AG04449 (cell line): ENCODE measurements at regions of chr6 and their contacts with region 1.

Region 1: DNA sequence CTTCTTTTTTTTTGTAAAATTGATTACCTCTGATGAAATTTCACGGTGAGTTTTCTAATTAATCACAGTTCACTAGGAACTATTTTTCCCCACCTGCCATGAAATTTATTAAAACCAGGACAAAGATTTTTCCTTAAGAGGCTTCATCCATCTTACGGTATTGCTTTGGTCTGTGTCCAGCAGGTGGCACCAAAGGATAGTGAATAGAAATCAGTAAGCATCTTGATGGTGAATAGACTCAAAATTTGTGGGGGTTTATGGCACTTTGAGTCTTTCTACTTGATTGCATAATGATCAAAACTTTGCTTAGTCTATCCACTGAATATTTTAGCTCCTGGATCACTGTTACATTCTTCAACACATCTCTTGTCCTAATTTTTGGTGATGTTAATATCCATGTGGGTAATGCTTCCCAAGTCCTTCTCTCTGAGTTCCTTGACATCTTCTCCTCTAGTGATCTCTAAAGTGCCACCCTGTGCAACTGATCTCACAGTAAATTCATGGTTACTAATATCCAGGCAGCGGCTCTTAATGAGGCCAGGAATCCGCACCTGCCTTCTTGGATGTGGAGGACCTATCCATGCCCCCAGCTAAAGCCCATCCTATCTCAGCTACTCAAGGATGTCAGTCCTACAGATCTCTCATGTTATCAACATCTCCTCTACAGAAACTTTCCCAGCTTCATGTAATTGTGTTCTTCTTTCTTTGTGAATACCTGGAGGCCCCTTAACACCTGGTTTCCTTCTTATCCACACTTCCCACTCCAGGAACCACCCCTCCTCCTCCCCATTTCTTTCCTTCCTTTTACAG is 54.5 kb downstream of the STMND1 start:
- DNase-seq: peak; percentile 64
- H3K4me3 ChIP-seq: no peak overlapping the region
- CTCF ChIP-seq: peak; percentile 66

Region 2: GRCh38 chr6:17167327-17167979 is 11.1 kb after region 1 on chr6:
- CTCF ChIA-PET with region 1: interaction called, 11 read pairs
- POLR2A ChIA-PET with region 1: no interaction called
- DNase-seq: no peak
- H3K4me3 ChIP-seq: no peak overlapping the region
- CTCF ChIP-seq: peak; percentile 68

Region 3: DNA sequence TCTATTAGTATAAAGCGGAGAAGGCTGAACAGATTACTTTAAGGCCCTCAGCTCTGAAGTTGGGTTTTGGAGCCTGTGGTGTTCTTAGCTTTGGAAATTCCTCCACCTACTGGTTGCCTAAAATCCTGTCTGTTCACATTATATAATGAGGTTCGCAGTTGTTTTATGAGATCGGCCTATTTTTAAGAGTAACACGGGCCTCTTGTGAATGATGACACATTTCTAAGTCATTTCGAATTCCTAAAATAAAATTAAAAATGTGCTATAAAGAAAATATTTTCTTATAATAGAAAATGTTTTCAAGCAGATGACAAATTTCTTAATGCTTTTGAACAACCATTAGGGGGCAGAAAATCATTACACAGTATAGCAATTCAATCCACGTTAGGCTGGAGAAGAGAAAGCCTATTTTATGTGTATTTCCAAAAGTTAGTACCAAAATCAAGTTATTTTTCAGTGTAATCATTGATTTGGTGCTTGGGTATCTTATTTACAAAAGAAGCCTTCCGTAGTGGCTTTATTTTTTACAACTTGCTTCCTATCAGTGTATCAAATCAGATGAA is 428.0 kb after region 1 on chr6:
- CTCF ChIA-PET with region 1: interaction called, 77 read pairs
- POLR2A ChIA-PET with region 1: no interaction called
- DNase-seq: no peak
- H3K4me3 ChIP-seq: no peak overlapping the region; the same call in 1 of the 2 replicates
- CTCF ChIP-seq: peak; percentile 68

Region 4: DNA sequence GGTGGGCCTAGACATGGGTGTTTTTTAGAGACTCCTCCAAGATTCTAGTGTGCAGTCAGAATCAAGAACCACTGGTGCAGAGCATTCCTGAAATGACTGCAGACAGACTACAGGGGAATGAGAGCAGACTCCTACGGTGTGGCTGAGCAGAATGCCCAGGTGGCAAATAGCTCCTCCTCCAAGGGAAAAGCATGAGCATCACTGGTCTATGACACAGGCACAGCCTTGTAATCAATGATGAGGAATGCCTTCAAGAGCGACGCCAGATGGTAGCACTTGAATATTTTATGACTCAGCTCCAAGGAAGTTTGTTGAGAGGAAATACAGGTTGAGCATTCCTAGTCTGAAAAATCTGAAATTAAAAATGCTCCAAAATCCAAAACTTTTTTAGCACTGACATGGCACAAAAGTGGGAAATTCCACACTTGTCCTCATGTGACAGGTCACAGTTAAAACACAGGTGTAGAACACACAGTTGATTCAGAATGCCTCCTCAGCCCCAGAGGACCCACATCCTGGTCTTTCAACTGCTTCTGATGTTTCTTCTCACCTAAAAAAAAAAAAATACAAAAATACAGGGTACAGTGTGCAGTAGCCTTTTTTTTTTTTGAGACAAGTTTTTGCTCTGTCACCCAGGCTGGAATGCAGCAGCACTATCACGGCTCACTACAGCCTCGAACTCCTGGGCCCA is 433.2 kb after region 1 on chr6:
- CTCF ChIA-PET with region 1: interaction called, 77 read pairs
- POLR2A ChIA-PET with region 1: no interaction called
- DNase-seq: no peak
- H3K4me3 ChIP-seq: no peak overlapping the region
- CTCF ChIP-seq: peak; percentile 8

Region 5: DNA sequence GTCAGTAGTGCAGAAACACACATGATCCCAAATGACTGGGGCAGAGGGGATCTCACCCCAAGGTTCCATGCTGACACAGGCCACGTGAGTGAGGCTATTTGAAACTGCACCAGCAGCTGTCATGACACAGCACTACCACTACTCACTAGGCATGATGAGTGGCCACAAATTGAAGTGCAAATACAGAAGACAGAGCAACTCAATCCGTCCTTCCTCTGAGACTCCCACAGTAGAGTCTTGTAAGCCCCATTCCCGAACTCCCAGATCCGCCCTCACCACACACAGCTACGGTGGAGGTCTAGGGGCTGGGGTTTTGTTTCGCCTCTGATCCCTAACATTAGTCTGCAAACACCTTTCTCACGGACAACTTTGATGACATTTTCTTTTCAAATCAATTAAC is 663.7 kb after region 1 on chr6:
- CTCF ChIA-PET with region 1: interaction called, 11 read pairs
- POLR2A ChIA-PET with region 1: no interaction called
- DNase-seq: no peak
- H3K4me3 ChIP-seq: no peak overlapping the region
- CTCF ChIP-seq: no peak